PC-9 (cell line): ENCODE measurements at regions of chr1 and their contacts with region 1.

Region 1: DNA sequence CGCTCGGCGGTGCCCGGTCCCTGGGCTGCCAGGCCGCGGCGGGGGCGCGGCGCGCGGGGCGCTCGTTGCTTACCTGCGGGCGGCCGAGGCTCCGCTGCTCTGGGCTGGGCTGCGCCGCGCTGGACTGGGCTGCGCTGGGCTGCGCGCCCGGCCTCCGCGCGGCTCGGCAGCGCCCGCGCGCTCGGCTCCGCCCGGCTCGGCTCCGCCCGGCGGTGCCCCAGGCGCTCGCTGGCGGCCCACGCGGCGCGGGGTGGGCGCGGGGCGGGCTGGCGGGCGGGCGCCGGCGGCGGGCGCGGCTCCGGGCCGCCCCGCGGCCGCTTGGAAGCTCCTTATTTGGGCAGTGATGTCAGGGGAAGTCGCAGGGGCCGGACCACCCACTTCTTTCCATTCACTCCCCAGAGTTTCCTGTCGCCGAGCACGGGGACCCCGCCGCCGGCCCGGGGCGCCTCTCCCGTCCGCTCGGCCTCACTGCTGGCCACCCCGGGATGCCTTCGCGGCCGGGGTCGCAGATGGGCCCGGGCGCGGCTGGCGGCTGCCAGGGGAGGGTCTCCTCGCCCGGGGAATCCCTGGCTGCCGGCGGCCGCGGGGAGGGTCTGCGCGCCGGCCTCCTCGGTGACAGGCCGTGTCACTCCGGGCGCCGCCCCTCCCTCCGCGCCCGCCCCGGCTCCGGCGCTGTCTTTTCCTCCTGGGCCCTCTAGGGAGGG is 177.7 kb upstream of the EDN2 start:
- DNase-seq: peak in 1 of 2 experiments; percentile 63
- H3K4me3 ChIP-seq: peak overlapping the region; percentile 81; the same call in 1 of the 2 replicates
- H3K27ac ChIP-seq: no peak overlapping the region
- H3K4me1 ChIP-seq: peaks cover 53% of the 10 kb centered on the region
- H3K27me3 ChIP-seq: no peaks in the 10 kb centered on the region
- CTCF ChIP-seq: no peak

Region 2: GRCh38 chr1:41504114-41505035 is 157.8 kb before region 1 on chr1:
- CTCF ChIA-PET with region 1: no interaction called
- POLR2A ChIA-PET with region 1: no interaction called
- intact Hi-C with region 1: loop called (anchors 1 kb)
- DNase-seq: peak; percentile 81 to 96
- H3K4me3 ChIP-seq: no peak overlapping the region
- H3K27ac ChIP-seq: peak overlapping the region; percentile 78
- H3K4me1 ChIP-seq: peaks cover 63% of the 10 kb centered on the region
- H3K27me3 ChIP-seq: no peaks in the 10 kb centered on the region
- CTCF ChIP-seq: no peak

Region 3: DNA sequence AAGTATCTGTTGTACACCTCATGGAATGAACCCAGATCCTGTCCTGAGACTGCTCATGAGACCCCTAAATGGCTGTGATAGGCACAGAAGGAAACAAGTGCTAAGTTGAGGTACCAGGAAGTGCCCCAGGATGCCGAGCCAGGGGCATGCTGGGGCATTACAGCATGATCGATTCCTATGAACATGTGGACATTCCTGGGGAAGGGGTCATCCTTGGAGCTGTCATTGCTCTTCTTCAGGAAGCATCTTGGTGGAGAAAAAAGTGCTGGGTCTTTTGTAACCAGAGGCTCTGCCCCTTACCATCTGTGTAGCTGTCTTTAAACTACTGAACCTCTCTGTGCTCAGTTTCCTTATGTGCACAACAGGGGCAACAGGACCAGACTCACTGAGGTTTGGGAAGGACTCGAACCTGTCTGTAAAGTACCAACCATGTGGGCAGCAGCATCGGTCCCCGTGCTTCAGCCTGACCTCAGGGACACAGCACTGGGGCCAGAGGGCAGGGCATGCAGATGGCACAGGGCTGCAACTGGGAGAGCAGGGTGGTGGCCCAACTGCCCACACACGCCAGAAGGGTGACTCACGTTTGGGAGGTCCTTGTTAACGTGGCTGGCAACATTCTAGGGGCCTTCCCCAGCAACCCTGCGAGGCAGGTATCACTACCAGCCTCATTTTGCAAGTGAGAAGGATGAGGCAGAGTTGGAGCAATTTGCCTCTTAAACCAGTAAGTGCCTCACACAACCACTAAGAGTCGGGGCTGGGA is 35.4 kb before region 1 on chr1:
- CTCF ChIA-PET with region 1: interaction called, 3 read pairs
- POLR2A ChIA-PET with region 1: interaction called, 3 read pairs
- intact Hi-C with region 1: loop called (anchors 2 kb)
- DNase-seq: peak; percentile 89 to 90
- H3K4me3 ChIP-seq: no peak overlapping the region
- H3K27ac ChIP-seq: no peak overlapping the region
- H3K4me1 ChIP-seq: peaks cover 26% of the 10 kb centered on the region
- H3K27me3 ChIP-seq: no peaks in the 10 kb centered on the region
- CTCF ChIP-seq: no peak

Region 4: GRCh38 chr1:41718497-41718896 is 56.3 kb after region 1 on chr1:
- CTCF ChIA-PET with region 1: no interaction called
- POLR2A ChIA-PET with region 1: no interaction called
- intact Hi-C with region 1: no loop called
- DNase-seq: no peak
- H3K4me3 ChIP-seq: no peak overlapping the region
- H3K27ac ChIP-seq: no peak overlapping the region
- H3K4me1 ChIP-seq: peaks cover 8% of the 10 kb centered on the region
- H3K27me3 ChIP-seq: no peaks in the 10 kb centered on the region
- CTCF ChIP-seq: no peak

Region 5: DNA sequence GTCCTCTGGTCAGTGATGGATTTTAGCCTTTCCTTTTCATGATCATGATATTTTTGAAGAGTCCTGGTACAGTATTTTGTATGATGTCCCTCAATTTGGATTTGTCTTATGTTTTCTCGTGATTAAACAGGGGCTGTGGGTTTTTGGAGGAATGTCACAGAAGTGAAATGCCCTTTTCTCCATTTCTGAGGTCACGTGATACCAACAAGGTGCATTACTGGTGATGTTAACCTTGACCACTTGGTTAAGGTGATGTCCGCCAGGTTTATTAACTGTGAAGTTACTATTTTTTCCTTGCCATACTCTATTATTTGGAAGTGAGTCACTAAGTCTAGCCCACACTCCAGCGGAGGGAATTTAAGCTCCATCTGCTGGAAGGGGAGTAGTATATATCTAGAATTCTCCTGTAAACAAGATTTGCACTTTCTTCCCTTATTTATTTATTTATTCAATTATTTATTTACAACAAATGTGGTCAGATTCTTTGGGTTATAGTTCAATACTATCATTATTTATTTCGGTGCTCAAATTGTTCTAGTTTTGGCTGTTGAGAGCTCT is 133.1 kb after region 1 on chr1:
- CTCF ChIA-PET with region 1: no interaction called
- POLR2A ChIA-PET with region 1: no interaction called
- intact Hi-C with region 1: loop called (anchors 2 kb)
- DNase-seq: no peak
- H3K4me3 ChIP-seq: no peak overlapping the region
- H3K27ac ChIP-seq: no peak overlapping the region
- H3K4me1 ChIP-seq: peaks cover 13% of the 10 kb centered on the region
- H3K27me3 ChIP-seq: no peaks in the 10 kb centered on the region
- CTCF ChIP-seq: peak; percentile 59

Region 6: DNA sequence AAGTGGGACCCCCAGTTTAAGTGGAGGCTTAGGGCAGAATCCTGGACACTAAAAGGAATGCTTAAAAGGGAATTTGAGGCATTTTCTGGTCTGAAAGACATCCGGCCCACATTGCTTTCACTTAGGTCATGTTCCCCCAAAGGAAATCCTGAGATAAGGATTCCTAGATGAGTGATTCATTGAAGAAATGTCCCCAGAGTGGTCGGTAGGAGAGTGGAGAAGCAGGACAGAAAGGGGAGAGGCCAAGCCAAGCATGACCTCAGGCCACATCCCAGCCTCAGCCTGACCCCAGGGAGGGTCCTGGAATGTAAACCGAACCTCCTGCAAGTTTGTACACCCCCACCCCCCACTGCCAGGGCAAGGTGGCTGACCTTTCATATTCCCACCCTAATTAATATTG is 239.9 kb after region 1 on chr1:
- CTCF ChIA-PET with region 1: no interaction called
- POLR2A ChIA-PET with region 1: no interaction called
- intact Hi-C with region 1: loop called (anchors 5 kb)
- DNase-seq: peak; percentile 87 to 91
- H3K4me3 ChIP-seq: peak overlapping the region; percentile 52; the same call in 1 of the 2 replicates
- H3K27ac ChIP-seq: peak overlapping the region; percentile 95
- H3K4me1 ChIP-seq: peaks cover 56% of the 10 kb centered on the region
- H3K27me3 ChIP-seq: no peaks in the 10 kb centered on the region
- CTCF ChIP-seq: no peak